Aorta (tissue), 5 donors: ENCODE measurements at regions of chr20 and their contacts with region 1.

Region 1: GRCh38 chr20:54475334-54476168 is at the start of gene DOK5:
- DNase-seq: peak; percentile 73 to 85
- ATAC-seq: peak; percentile 90
- H3K4me3 ChIP-seq: peak within 1 kb of the TSS; percentile 51 to 65
- H3K27ac ChIP-seq: peak within 1 kb of the TSS in 1 of 2 donors; percentile 55
- H3K4me1 ChIP-seq: peaks cover 0 to 3% of the 10 kb centered on the region in 2 donors
- H3K27me3 ChIP-seq: no peaks in the 10 kb centered on the region
- total RNA-seq, gene DOK5: 9.1 to 13.3 TPM

Region 2: GRCh38 chr20:53915446-53916172 is 559.9 kb before region 1 on chr20:
- intact Hi-C with region 1: loop called in 1 of 2 experiments (anchors 10 kb)
- DNase-seq: peak; percentile 97 to 99
- ATAC-seq: peak; percentile 96
- H3K4me3 ChIP-seq: peak overlapping the region; percentile 20 to 75
- H3K27ac ChIP-seq: peak overlapping the region in 1 of 2 donors; percentile 52
- H3K4me1 ChIP-seq: no peaks in the 10 kb centered on the region
- H3K27me3 ChIP-seq: no peaks in the 10 kb centered on the region

Region 3: DNA sequence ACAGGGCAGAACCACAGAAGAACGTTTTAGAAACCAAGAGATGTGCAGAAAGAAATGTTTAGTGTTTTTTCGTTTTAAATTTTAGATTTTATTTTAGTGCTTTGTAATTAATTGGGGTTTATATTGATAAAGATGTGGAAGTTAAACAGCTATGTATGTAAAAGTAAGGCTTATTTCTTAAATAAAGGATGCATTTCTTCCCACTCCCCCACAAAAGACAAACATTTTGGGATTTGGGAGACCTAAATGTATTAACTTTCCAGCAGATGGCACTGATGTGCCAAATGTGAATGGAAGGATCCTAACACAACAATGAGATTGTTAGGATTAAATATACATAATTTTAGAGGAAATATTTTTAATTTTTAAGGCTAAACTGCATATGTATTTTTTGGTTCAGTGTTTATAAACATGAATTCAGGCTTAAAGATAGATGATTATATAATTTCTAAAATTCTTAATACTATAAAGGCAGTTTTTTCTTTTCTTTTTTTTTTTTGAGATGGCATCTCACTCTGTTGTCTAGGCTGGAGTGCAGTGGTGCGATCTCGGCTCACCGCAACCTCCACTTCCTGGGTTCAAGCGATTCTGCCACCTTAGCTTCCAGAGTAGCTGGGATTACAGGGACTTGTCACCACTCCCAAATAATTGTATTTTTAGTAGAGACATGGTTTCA is 255.7 kb before region 1 on chr20:
- intact Hi-C with region 1: loop called in 1 of 2 experiments (anchors 5 kb)
- DNase-seq: no peak
- ATAC-seq: no peak
- H3K4me3 ChIP-seq: no peak overlapping the region
- H3K27ac ChIP-seq: no peak overlapping the region
- H3K4me1 ChIP-seq: peaks cover 2 to 5% of the 10 kb centered on the region in 2 donors
- H3K27me3 ChIP-seq: no peaks in the 10 kb centered on the region

Region 4: GRCh38 chr20:54345301-54345724 is 130.2 kb before region 1 on chr20:
- intact Hi-C with region 1: loop called in 1 of 2 experiments (anchors 5 kb)
- DNase-seq: no peak
- ATAC-seq: peak; percentile 72
- H3K4me3 ChIP-seq: no peak overlapping the region
- H3K27ac ChIP-seq: no peak overlapping the region
- H3K4me1 ChIP-seq: no peaks in the 10 kb centered on the region
- H3K27me3 ChIP-seq: no peaks in the 10 kb centered on the region

Region 5: DNA sequence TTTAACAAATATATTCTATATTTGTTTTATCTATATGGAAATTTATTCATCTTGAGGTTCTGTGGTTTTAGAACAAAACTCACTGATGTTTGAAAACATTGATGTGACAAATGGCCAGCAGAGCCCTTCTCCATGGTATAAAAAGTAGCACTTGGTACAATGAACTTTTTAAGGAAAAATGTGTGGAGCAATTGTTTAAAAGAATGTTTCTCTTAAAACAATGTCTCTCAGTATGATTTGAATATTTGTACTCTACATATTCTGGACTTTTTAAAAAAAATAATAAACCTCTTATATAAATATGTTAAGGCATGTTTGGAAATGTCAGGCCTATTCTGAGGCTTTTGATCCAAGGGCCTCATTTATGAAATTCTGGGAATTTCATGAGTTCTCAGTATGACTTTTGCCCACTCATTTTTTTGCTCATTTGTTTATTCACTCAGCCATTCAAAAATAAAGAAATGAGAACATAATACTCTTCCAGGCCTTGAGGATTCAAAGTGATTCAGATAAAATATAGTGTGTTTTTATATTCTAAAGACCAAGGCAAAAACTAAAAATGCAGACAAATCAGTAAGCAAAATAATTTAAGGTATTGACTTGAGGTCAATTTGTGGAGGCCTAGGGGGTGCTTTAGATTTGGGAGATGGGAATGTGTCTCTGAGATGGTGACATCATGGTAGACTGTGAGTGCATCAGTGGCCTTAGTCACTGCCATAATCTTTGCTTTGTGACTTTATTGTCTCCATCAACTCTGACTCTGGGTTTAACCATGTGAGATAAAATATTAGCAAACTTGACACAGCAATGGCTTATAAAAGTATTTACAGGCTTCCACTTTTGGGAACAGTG is 60.3 kb after region 1 on chr20:
- intact Hi-C with region 1: no loop called
- DNase-seq: no peak
- ATAC-seq: no peak
- H3K4me3 ChIP-seq: no peak overlapping the region
- H3K27ac ChIP-seq: no peak overlapping the region
- H3K4me1 ChIP-seq: no peaks in the 10 kb centered on the region
- H3K27me3 ChIP-seq: no peaks in the 10 kb centered on the region

Region 6: GRCh38 chr20:54566031-54566885 is 90.7 kb after region 1 on chr20:
- intact Hi-C with region 1: loop called in 1 of 2 experiments (anchors 10 kb)
- DNase-seq: no peak
- ATAC-seq: no peak
- H3K4me3 ChIP-seq: no peak overlapping the region
- H3K27ac ChIP-seq: no peak overlapping the region
- H3K4me1 ChIP-seq: no peaks in the 10 kb centered on the region
- H3K27me3 ChIP-seq: no peaks in the 10 kb centered on the region

Region 7: DNA sequence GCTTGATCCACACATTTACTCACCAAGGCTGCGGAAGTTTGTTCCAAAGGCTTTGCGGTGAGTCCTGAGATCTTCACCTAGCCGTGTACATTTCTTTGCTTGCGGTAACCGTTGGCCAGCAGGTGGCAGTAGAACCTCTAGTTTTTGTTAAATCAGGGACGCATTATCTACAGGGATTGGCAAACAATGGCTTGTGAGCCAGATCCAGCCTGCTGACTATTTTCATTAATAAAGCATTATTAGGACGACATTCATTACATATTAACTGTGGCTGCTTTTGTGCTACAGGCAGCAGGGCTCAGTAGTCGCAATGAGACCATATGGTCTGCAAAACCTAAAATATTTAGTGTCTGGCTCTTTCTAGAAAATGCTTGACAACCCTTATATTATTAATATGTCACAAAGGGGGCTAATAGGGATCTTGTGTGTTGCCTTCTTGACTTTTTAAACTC is 174.0 kb after region 1 on chr20:
- intact Hi-C with region 1: loop called in 1 of 2 experiments (anchors 10 kb)
- DNase-seq: peak; percentile 79 to 89
- ATAC-seq: no peak
- H3K4me3 ChIP-seq: no peak overlapping the region
- H3K27ac ChIP-seq: no peak overlapping the region
- H3K4me1 ChIP-seq: no peaks in the 10 kb centered on the region
- H3K27me3 ChIP-seq: no peaks in the 10 kb centered on the region

Region 8: DNA sequence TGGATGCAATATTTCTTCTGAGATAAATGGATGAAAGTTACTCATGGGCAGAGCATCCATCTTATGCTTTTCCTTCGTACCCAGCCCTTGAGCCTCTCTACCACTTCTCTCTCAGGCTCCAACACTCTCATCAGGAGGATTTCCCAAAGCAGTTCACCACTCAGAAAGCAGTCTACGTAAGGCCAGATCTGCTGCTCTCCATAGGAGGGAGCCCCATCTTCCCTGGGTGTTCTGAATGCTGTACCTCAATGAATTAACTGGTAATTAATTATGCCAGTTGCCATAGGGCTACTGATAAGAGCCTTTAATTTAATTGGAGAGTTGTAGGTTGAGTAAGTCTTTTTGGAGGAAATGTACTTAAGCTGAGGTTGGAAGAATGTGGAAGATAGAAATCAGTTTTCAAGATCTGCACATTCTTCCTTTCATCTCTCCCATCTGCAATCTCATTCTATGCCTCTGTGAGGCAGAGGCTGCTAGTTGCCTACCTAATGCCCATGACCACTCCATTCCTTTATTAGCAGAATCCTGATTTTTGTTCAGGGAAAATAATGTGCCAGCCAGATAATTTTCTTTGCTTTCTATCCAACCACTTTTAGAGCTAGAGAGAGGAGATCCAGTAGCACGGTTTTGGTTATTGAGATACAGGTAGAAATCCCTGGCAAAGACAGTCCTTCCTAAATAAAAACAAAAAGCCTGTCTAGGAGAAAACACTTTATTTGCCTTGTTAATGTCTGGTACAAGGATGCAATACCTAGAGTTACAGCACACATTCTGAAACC is 332.7 kb after region 1 on chr20:
- intact Hi-C with region 1: no loop called
- DNase-seq: no peak
- ATAC-seq: no peak
- H3K4me3 ChIP-seq: no peak overlapping the region
- H3K27ac ChIP-seq: no peak overlapping the region
- H3K4me1 ChIP-seq: no peaks in the 10 kb centered on the region
- H3K27me3 ChIP-seq: no peaks in the 10 kb centered on the region